ENCODE measurements at regions of chr5 and their contacts with region 1.

Region 1: DNA sequence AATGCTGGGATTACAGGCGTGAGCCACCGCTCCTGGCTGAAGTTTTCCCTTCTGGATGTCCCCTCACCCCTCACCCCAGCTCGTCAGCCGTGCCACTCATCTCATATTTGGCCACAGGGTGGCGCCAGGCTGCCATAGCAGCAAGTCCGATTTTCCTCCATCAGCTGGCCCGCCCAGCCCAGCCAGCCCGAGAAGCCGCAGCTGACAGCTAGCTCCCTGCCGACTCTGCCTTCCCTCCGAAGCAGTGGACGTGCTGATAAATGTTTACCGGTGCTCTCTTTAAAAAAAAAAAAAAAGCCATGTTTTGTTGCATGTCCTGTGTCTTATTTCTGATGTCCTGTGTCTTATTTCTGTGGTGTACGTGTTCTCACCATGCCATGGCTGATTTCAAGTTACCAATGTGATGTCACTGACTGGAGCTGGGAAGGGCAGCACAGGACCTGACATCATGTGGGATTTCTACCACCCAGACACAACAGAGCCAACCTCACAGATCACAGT is 58.3 kb downstream of the PFDN1 start:
- DNase-seq: peak; percentile 94
- ATAC-seq: peak; percentile 75

Region 2: DNA sequence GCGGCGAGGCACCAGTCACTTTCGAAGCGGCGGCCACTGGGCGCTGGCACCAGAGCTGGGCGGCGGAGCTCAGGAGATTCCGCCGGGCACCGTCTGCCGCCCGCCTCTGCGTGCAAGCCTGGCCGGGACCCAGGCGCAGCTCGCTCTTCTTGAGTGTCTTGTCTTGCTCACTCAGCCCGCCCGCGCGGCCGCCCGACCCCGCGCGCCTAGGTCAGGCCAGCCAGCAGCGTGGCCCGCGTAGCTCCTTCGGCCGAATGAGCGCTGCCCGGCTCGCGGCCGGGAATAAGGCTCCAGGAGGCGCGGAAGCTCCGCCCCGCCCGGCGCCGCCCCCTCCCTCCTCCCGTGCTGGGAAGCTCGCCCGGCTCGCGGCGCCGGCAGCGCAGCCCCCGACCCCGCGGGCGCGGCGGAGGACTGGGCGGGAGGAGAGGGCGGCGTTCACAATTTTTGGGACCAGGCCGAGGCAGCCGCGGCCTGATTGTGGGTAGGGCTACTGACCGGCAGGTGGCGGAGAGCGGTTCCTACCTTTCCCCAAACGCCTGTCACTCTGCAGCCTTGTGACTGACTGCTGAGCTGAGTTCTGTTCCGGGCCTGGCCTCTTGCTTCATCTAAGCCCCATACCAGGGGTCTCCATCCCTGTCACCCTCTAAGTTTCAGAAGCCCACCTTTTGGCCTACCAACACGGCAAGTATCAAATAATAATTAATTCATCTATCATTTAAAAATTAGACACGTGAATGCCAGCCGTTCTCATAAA is 102.0 kb after region 1 on chr5 and contains the start of gene HBEGF:
- intact Hi-C with region 1: loop called (anchors 5 kb)
- DNase-seq: peak; percentile 90
- ATAC-seq: peak; percentile 79
- total RNA-seq, gene HBEGF: 21.1 TPM

Measured in sciatic nerve (tissue), 2 donors.